Activated naive CD4-positive, alpha-beta T cell treated with anti-CD3 and anti-CD28 coated beads for 36 hours (primary cell): ENCODE measurements at regions of chr9 and their contacts with region 1.

Region 1: DNA sequence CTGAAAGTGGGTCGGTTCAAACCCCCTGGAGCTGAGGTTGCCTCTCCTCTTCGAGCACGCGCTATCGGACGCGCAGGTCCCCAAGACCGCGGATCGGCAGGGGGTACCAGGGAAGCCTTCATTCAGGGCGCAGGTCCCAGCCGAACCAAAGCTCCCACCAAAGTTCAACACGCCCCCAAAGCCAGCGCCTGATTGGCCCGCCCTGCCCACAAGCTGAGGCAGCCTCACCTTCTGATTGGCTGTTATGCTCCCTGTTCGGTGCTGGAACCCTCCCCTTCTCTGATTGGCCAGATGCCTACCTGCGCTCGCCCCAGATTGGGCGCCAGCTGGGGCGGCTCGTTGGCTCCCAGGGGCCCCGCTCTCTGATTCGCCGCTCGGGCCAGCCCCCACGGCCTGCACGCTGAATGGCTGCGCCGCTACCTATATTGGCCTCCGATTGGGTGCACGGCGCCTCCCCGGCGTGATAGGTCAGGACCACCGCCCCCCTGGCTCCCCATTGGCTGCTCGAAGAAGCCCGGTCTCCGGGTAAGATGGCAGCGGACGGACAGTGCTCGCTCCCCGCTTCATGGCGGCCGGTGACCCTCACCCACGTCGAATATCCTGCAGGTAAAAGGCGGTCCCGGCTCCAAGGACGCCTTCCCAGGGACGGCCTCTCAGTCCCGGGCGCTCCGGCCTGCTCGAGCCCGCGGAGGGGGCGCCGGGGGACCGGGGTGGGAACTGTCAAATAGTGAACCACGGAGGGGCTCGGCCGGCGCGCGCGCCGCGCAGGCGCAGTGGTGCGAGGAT is at the start of gene DOLPP1:
- DNase-seq: peak; percentile 99
- H3K4me3 Mint-ChIP-seq: peak within 1 kb of the TSS; percentile 83
- H3K27ac Mint-ChIP-seq: peak within 1 kb of the TSS; percentile 46
- H3K4me1 Mint-ChIP-seq: peaks cover 27% of the 10 kb centered on the region
- H3K27me3 Mint-ChIP-seq: no peaks in the 10 kb centered on the region
- total RNA-seq, gene DOLPP1: 15.5 to 19.9 TPM

Region 2: DNA sequence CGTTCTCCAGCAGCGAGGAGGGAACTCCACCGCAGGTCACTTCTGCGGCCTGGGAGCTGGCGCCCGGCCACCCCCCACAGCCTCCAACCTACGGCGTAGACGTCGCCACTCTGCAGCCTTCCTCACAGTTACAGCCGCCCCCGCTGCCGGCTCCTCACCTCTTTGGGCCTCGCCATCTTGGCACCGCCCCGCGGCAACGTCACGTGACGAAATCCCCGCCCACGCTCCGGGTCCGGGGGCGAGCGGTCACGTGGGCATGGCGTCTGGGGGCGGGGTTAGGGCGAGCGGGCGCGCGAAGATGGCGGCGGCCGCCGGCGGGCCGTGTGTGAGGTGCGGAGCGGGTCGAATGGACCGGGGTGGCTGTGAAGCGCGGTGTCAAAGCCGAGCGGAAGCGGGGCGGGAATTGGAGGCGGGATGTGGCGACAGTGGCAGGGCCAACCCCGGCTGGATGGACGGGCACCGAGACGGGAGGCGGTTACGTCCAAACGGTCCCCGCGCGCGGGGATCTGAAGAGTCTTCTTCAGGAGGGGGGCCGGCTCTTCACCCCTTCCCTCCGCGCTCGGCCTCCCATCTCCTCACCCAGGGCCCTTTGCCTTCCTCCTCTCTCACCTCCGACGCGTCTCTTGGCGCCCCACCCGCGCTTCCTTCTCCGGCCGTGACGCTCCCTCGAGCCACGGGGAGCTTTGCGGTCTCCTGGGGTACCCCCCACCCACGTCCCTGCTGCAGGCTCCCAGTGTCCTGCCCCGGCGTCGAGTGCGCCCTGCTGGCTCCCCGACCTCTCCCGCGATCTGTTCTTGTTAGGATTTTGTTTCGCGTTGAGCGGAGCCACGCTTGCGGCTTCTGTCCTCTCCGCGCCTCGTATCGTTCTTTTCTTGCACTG is 133.1 kb before region 1 on chr9 and contains the starts of genes DOLK and NUP188:
- CTCF ChIA-PET with region 1: no interaction called
- intact Hi-C with region 1: loop called (anchors 2 kb)
- DNase-seq: peak; percentile 98
- H3K4me3 Mint-ChIP-seq: peak within 1 kb of the TSS; percentile 97
- H3K27ac Mint-ChIP-seq: peak within 1 kb of the TSS; percentile 94
- H3K4me1 Mint-ChIP-seq: peaks cover 33% of the 10 kb centered on the region
- H3K27me3 Mint-ChIP-seq: no peaks in the 10 kb centered on the region
- total RNA-seq, gene DOLK: 2.5 to 2.7 TPM
- total RNA-seq, gene NUP188: 101 to 112 TPM

Region 3: DNA sequence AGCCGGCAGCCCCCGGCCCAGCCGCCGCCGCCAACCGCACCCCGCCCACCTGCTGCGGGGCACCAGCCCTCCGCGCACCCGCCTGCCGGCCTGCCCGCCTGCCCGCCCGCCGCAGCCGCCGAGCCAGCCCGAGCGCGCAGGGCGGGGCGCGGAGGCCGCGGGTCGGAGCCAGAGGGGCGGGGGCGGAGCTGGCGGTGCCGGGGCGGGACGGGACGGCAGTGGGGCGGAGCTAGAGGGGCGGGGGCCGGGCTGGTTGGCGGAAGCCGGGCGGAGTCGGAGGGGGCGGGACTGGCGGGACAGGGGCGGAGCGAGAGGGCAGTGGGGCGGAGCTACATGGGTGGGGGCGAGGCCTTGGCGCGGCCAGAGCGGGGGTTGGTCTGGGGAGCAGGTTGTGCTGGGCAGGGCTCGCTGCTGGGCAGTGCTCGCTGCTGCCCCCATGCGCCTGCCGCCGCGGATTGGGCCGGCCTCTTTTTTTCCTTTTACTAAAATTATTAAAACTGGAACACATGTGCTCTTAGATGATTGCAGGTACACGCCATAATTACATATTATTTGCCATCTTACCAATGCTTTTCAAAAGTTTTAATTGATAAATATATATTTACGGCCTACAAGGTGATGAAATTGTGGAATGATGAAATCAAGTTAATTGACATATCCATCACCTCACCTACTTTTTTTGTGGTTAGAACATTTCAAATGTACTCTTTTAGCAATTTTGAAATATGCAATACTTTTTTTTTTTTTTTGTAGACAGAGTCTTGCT is 52.4 kb before region 1 on chr9 and contains the start of gene SH3GLB2:
- CTCF ChIA-PET with region 1: no interaction called
- intact Hi-C with region 1: loop called (anchors 2 kb)
- DNase-seq: peak; percentile 95
- H3K4me3 Mint-ChIP-seq: peak within 1 kb of the TSS; percentile 84
- H3K27ac Mint-ChIP-seq: no peak within 1 kb of the TSS
- H3K4me1 Mint-ChIP-seq: peaks cover 13% of the 10 kb centered on the region
- H3K27me3 Mint-ChIP-seq: no peaks in the 10 kb centered on the region
- total RNA-seq, gene SH3GLB2: 38.0 to 38.2 TPM

Region 4: GRCh38 chr9:129036241-129036922 is 44.4 kb before region 1 on chr9 and contains the start of gene MIGA2:
- CTCF ChIA-PET with region 1: interaction called, 4 read pairs
- intact Hi-C with region 1: loop called (anchors 1 kb)
- DNase-seq: peak; percentile 97
- H3K4me3 Mint-ChIP-seq: peak within 1 kb of the TSS; percentile 98
- H3K27ac Mint-ChIP-seq: peak within 1 kb of the TSS; percentile 71
- H3K4me1 Mint-ChIP-seq: peaks cover 30% of the 10 kb centered on the region
- H3K27me3 Mint-ChIP-seq: no peaks in the 10 kb centered on the region
- total RNA-seq, gene MIGA2: 36.3 to 42.7 TPM

Region 5: GRCh38 chr9:129068990-129069861 is 11.6 kb before region 1 on chr9:
- CTCF ChIA-PET with region 1: interaction called, 4 read pairs
- intact Hi-C with region 1: loop called (anchors 1 kb)
- DNase-seq: peak; percentile 65
- H3K4me3 Mint-ChIP-seq: peak overlapping the region; percentile 26
- H3K27ac Mint-ChIP-seq: peak overlapping the region; percentile 80
- H3K4me1 Mint-ChIP-seq: peaks cover 26% of the 10 kb centered on the region
- H3K27me3 Mint-ChIP-seq: no peaks in the 10 kb centered on the region

Region 6: GRCh38 chr9:129110740-129111527 is 30.1 kb after region 1 on chr9 and contains the starts of genes CRAT and PTPA:
- CTCF ChIA-PET with region 1: interaction called, 3 read pairs
- intact Hi-C with region 1: loop called (anchors 1 kb)
- DNase-seq: peak; percentile 99
- H3K4me3 Mint-ChIP-seq: peak within 1 kb of the TSS; percentile 87
- H3K27ac Mint-ChIP-seq: peak within 1 kb of the TSS; percentile 93
- H3K4me1 Mint-ChIP-seq: peaks cover 38% of the 10 kb centered on the region
- H3K27me3 Mint-ChIP-seq: no peaks in the 10 kb centered on the region
- total RNA-seq, gene CRAT: 15.0 to 15.8 TPM
- total RNA-seq, gene PTPA: 83.0 to 94.5 TPM